H1 (cell line): ENCODE measurements at regions of chr12 and their contacts with region 1.

Region 1: GRCh38 chr12:65121049-65121955 is at the start of gene WIF1:
- DNase-seq: peak; percentile 56 to 86
- H3K4me3 ChIP-seq: peak within 1 kb of the TSS; percentile 23 to 60 (median 42)
- H3K27ac ChIP-seq: no peak within 1 kb of the TSS
- H3K4me1 ChIP-seq: no peaks in the 10 kb centered on the region; a peak in 1 of 7 replicates
- H3K27me3 ChIP-seq: peaks cover 0 to 25% (median 18%) of the 10 kb centered on the region in 4 experiments; a peak in 6 of 7 replicates
- CTCF ChIP-seq: peak; percentile 60 to 68 (median 68)
- EP300 ChIP-seq: no peak
- POLR2A ChIP-seq: no peak
- RAD21 ChIP-seq: peak; percentile 7 to 12; a peak in 2 of 4 replicates
- total RNA-seq, gene WIF1: 7.8 and 9.1 TPM in 2 replicates

Region 2: GRCh38 chr12:64883596-64884542 is 237.4 kb before region 1 on chr12:
- CTCF ChIA-PET with region 1: interaction called, 18 read pairs
- POLR2A ChIA-PET with region 1: no interaction called
- DNase-seq: no peak
- H3K4me3 ChIP-seq: no peak overlapping the region
- H3K27ac ChIP-seq: no peak overlapping the region
- H3K4me1 ChIP-seq: no peaks in the 10 kb centered on the region
- H3K27me3 ChIP-seq: no peaks in the 10 kb centered on the region
- CTCF ChIP-seq: peak; percentile 10 to 41 (median 20); a peak in 3 of 4 replicates
- EP300 ChIP-seq: no peak
- POLR2A ChIP-seq: no peak
- RAD21 ChIP-seq: peak in 1 of 2 experiments; percentile 48; a peak in 3 of 4 replicates

Region 3: DNA sequence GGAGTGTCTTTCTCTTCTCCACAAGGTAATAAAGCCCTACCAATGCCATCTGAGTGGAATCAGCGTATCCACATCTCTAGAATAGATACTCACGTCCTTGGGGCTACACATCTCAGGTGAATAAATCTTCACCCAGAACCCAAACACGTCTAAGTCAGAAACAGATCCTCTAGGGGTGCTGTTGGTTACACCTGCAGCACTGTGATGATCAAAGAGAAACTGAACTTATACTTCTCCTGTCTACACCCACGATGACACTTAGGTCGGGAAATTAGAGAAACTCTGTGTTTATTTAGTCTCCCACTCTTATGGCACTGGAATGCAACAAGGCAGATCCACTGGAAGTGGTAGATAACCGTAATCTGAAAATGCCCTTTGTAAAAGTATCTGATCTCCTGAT is 46.4 kb before region 1 on chr12:
- CTCF ChIA-PET with region 1: no interaction called
- POLR2A ChIA-PET with region 1: no interaction called
- DNase-seq: no peak
- H3K4me3 ChIP-seq: no peak overlapping the region
- H3K27ac ChIP-seq: no peak overlapping the region
- H3K4me1 ChIP-seq: peaks cover 0 to 3% (median 0%) of the 10 kb centered on the region in 4 experiments; a peak in 1 of 7 replicates
- H3K27me3 ChIP-seq: no peaks in the 10 kb centered on the region
- CTCF ChIP-seq: peak in 1 of 3 experiments; percentile 44; a peak in 1 of 4 replicates
- EP300 ChIP-seq: no peak
- POLR2A ChIP-seq: no peak
- RAD21 ChIP-seq: peak; percentile 2 to 33; a peak in 2 of 4 replicates

Region 4: GRCh38 chr12:65106948-65107347 is 14.4 kb before region 1 on chr12:
- CTCF ChIA-PET with region 1: interaction called, 22 read pairs
- POLR2A ChIA-PET with region 1: no interaction called
- DNase-seq: no peak
- H3K4me3 ChIP-seq: no peak overlapping the region
- H3K27ac ChIP-seq: no peak overlapping the region
- H3K4me1 ChIP-seq: no peaks in the 10 kb centered on the region
- H3K27me3 ChIP-seq: no peaks in the 10 kb centered on the region
- CTCF ChIP-seq: peak in 1 of 3 experiments; percentile 38; a peak in 2 of 4 replicates
- EP300 ChIP-seq: no peak
- POLR2A ChIP-seq: no peak
- RAD21 ChIP-seq: no peak

Region 5: DNA sequence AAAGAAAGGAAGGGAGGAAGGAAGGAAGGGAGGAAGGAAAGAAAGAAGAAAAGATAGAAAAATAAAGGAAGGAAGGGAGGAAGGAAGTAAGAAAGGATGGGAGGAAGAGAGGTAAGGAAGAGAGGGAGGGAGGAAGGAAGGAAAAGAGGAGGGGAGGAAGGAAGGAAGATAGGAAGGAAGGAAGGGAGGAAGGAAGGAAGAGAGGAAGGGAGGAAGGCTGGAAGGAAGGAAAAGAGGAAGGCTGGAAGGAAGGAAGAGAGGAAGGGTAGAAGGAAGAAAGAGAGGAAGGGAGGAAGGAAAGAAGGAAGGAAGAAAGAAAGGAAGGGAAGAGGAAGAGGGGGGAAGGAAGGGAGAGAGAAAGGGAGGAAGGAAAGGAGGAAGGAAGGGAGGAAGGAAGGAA is 12.6 kb after region 1 on chr12:
- CTCF ChIA-PET with region 1: interaction called, 25 read pairs
- POLR2A ChIA-PET with region 1: no interaction called
- DNase-seq: no peak
- H3K4me3 ChIP-seq: no peak overlapping the region
- H3K27ac ChIP-seq: no peak overlapping the region
- H3K4me1 ChIP-seq: peaks cover 0 to under 1% (median 0%) of the 10 kb centered on the region in 4 experiments; a peak in 1 of 7 replicates
- H3K27me3 ChIP-seq: no peaks in the 10 kb centered on the region
- CTCF ChIP-seq: no peak
- EP300 ChIP-seq: no peak
- POLR2A ChIP-seq: no peak
- RAD21 ChIP-seq: no peak

Region 6: GRCh38 chr12:65415826-65416225 is 294.5 kb after region 1 on chr12:
- CTCF ChIA-PET with region 1: no interaction called
- POLR2A ChIA-PET with region 1: no interaction called
- DNase-seq: no peak
- H3K4me3 ChIP-seq: no peak overlapping the region
- H3K27ac ChIP-seq: no peak overlapping the region
- H3K4me1 ChIP-seq: no peaks in the 10 kb centered on the region
- H3K27me3 ChIP-seq: no peaks in the 10 kb centered on the region
- CTCF ChIP-seq: no peak
- EP300 ChIP-seq: no peak
- POLR2A ChIP-seq: no peak
- RAD21 ChIP-seq: no peak